H1 (cell line): ENCODE measurements at regions of chr1 and their contacts with region 1.

Region 1: GRCh38 chr1:156251527-156251926 is 3.7 kb upstream of the PAQR6 start:
- DNase-seq: no peak
- H3K4me3 ChIP-seq: no peak overlapping the region
- H3K27ac ChIP-seq: no peak overlapping the region
- H3K4me1 ChIP-seq: peaks cover 0 to 14% (median 6%) of the 10 kb centered on the region in 4 experiments
- H3K27me3 ChIP-seq: no peaks in the 10 kb centered on the region
- CTCF ChIP-seq: no peak
- EP300 ChIP-seq: no peak
- POLR2A ChIP-seq: no peak
- RAD21 ChIP-seq: no peak

Region 2: GRCh38 chr1:156262461-156263287 is 11.1 kb after region 1 on chr1:
- CTCF ChIA-PET with region 1: interaction called, 31 read pairs
- POLR2A ChIA-PET with region 1: interaction called, 30 read pairs
- DNase-seq: no peak
- H3K4me3 ChIP-seq: no peak overlapping the region
- H3K27ac ChIP-seq: no peak overlapping the region
- H3K4me1 ChIP-seq: no peaks in the 10 kb centered on the region
- H3K27me3 ChIP-seq: no peaks in the 10 kb centered on the region
- CTCF ChIP-seq: no peak
- EP300 ChIP-seq: no peak
- POLR2A ChIP-seq: no peak
- RAD21 ChIP-seq: no peak